ENCODE measurements at regions of chr4 and their contacts with region 1.

Region 1: GRCh38 chr4:4216648-4217047 is 10.1 kb downstream of the OTOP1 start:
- DNase-seq: no peak
- ATAC-seq: no peak
- H3K4me3 ChIP-seq: no peak overlapping the region
- H3K27ac ChIP-seq: no peak overlapping the region
- H3K4me1 ChIP-seq: no peaks in the 10 kb centered on the region
- H3K27me3 ChIP-seq: no peaks in the 10 kb centered on the region; a peak in 1 of 5 replicates
- CTCF ChIP-seq: no peak
- EP300 ChIP-seq: no peak
- POLR2A ChIP-seq: no peak
- RAD21 ChIP-seq: no peak

Region 2: GRCh38 chr4:3880615-3881120 is 336.0 kb before region 1 on chr4:
- CTCF ChIA-PET with region 1: no interaction called
- POLR2A ChIA-PET with region 1: no interaction called
- in situ Hi-C with region 1: no loop called
- intact Hi-C with region 1: no loop called
- DNase-seq: peak; percentile 56
- ATAC-seq: peak; percentile 96
- H3K4me3 ChIP-seq: no peak overlapping the region
- H3K27ac ChIP-seq: no peak overlapping the region
- H3K4me1 ChIP-seq: peaks cover 16% of the 10 kb centered on the region
- H3K27me3 ChIP-seq: peaks cover 0 to 20% of the 10 kb centered on the region in 2 experiments; a peak in 2 of 5 replicates
- CTCF ChIP-seq: peak; percentile 96
- EP300 ChIP-seq: no peak
- POLR2A ChIP-seq: no peak
- RAD21 ChIP-seq: peak; percentile 96

Region 3: DNA sequence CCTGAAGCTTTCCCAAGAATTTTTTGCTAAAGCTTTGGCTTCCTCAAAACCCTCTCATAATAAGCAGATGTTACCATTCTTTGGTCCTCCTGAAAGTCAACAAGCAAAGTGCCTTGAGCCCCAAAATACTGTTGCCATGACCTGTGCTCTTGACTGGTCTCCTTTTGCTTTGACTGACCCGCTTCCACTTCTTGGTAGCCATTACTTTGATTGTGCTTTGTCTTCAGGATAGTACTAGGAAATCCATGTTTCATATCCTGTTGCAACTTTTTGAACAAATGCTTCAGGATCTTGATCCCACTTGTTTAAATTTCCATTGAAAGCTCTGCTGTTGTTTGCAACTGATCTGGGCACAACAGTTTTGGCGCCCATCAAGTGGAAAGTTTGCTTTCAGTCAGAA is 17.0 kb after region 1 on chr4:
- CTCF ChIA-PET with region 1: no interaction called
- POLR2A ChIA-PET with region 1: no interaction called
- in situ Hi-C with region 1: no loop called
- intact Hi-C with region 1: loop called (anchors 2 kb)
- DNase-seq: no peak
- ATAC-seq: no peak
- H3K4me3 ChIP-seq: no peak overlapping the region
- H3K27ac ChIP-seq: no peak overlapping the region
- H3K4me1 ChIP-seq: no peaks in the 10 kb centered on the region
- H3K27me3 ChIP-seq: peaks cover 0 to 2% of the 10 kb centered on the region in 2 experiments; a peak in 2 of 5 replicates
- CTCF ChIP-seq: no peak
- EP300 ChIP-seq: no peak
- POLR2A ChIP-seq: no peak
- RAD21 ChIP-seq: no peak